ENCODE measurements at regions of chr1 and their contacts with region 1.

Region 1: GRCh38 chr1:25895365-25895993 is 10.7 kb downstream of the STMN1 start:
- DNase-seq: no peak
- ATAC-seq: peak; percentile 97
- H3K4me3 ChIP-seq: no peak overlapping the region
- H3K27ac ChIP-seq: no peak overlapping the region
- H3K4me1 ChIP-seq: peaks cover 6% of the 10 kb centered on the region; the same call in 1 of the 2 replicates
- H3K27me3 ChIP-seq: no peaks in the 10 kb centered on the region
- CTCF ChIP-seq: peak; percentile 98 to 100 (median 99); a peak in 5 of 6 replicates
- EP300 ChIP-seq: no peak
- POLR2A ChIP-seq: peak; percentile 44
- RAD21 ChIP-seq: peak; percentile 89

Region 2: DNA sequence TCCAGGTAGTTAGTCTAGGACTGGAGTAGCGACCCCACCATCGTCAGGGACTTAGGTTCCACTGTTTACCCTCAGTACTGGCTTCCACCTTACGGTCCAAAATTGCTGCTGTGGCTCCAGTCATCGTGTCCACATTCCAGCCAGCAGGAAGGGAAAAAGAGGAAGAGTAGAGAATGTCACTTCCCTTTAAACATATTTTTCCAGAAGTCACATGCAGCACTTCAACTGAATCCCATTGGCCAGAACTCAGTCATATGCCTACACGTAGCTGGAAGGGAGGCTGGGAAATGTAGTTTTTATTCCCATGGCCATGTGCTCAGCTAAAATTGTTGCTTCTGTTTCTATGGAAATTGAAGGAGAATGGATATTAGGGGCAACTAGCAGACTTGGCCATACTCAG is 179.6 kb before region 1 on chr1:
- CTCF ChIA-PET with region 1: no interaction called
- POLR2A ChIA-PET with region 1: no interaction called
- RAD21 ChIA-PET with region 1: no interaction called
- SMC1A ChIA-PET with region 1: no interaction called
- in situ Hi-C with region 1: no loop called
- intact Hi-C with region 1: no loop called
- DNase-seq: no peak
- ATAC-seq: no peak
- H3K4me3 ChIP-seq: no peak overlapping the region
- H3K27ac ChIP-seq: no peak overlapping the region
- H3K4me1 ChIP-seq: no peaks in the 10 kb centered on the region
- H3K27me3 ChIP-seq: 0 out of 4 replicates have a peak, but pooled peaks cover 0 to 2% of the 10 kb centered on the region in 2 experiments
- CTCF ChIP-seq: no peak
- EP300 ChIP-seq: no peak
- POLR2A ChIP-seq: no peak
- RAD21 ChIP-seq: no peak

Region 3: DNA sequence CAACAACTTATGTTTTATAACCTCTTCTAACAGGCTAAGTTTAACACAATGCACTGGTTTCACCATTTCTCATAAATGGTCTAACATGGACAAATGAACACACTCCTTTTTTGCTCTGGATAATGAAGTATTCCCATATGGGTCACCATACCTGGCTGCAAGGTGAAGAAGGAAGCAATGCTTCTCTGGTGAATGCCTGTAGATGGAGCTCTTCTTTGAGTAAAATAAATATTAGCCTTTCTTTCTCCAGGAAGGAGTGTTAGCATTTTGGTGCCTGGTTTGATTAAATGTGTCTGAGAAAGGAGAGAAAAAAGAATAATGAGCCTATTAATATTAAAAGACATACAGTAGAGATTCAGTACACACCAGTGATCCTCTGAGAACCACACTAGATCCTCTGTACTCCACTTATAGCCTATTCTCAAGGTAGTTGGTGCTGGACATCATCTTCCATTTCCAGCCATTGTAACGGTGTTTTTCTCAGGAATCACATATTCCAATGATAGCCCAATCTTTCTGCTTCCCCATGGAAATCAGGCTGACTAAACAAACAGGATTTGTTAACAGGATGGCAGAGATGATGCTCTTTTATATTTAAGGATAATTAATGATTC is 58.1 kb before region 1 on chr1:
- CTCF ChIA-PET with region 1: interaction called, 15 read pairs
- POLR2A ChIA-PET with region 1: no interaction called
- RAD21 ChIA-PET with region 1: interaction called, 3 read pairs
- SMC1A ChIA-PET with region 1: no interaction called
- in situ Hi-C with region 1: no loop called
- intact Hi-C with region 1: no loop called
- DNase-seq: no peak
- ATAC-seq: peak; percentile 49; the same call in 2 of the 3 replicates
- H3K4me3 ChIP-seq: no peak overlapping the region
- H3K27ac ChIP-seq: no peak overlapping the region
- H3K4me1 ChIP-seq: no peaks in the 10 kb centered on the region
- H3K27me3 ChIP-seq: no peaks in the 10 kb centered on the region
- CTCF ChIP-seq: peak; percentile 40 to 54 (median 50); a peak in 5 of 6 replicates
- EP300 ChIP-seq: no peak
- POLR2A ChIP-seq: no peak
- RAD21 ChIP-seq: peak; percentile 49

Region 4: GRCh38 chr1:25874934-25875855 is 20.3 kb before region 1 on chr1 and contains the start of gene PAQR7:
- CTCF ChIA-PET with region 1: interaction called, 25 read pairs
- POLR2A ChIA-PET with region 1: interaction called, 4 read pairs
- RAD21 ChIA-PET with region 1: interaction called, 13 read pairs
- SMC1A ChIA-PET with region 1: interaction called, 7 read pairs
- in situ Hi-C with region 1: no loop called
- intact Hi-C with region 1: no loop called
- DNase-seq: no peak
- ATAC-seq: peak; percentile 86
- H3K4me3 ChIP-seq: peak within 1 kb of the TSS; percentile 76
- H3K27ac ChIP-seq: peak within 1 kb of the TSS; percentile 27
- H3K4me1 ChIP-seq: peaks cover 34% of the 10 kb centered on the region
- H3K27me3 ChIP-seq: no peaks in the 10 kb centered on the region; a peak in 1 of 4 replicates
- CTCF ChIP-seq: no peak
- EP300 ChIP-seq: no peak
- POLR2A ChIP-seq: peak; percentile 51; the same call in 1 of the 2 replicates
- RAD21 ChIP-seq: no peak
- polyA plus RNA-seq, gene PAQR7: 1.1 to 2.5 TPM

Region 5: GRCh38 chr1:25971066-25971810 is 75.8 kb after region 1 on chr1:
- CTCF ChIA-PET with region 1: interaction called, 5 read pairs
- POLR2A ChIA-PET with region 1: interaction called, 10 read pairs
- RAD21 ChIA-PET with region 1: interaction called, 3 read pairs
- SMC1A ChIA-PET with region 1: interaction called, 6 read pairs
- in situ Hi-C with region 1: no loop called
- intact Hi-C with region 1: no loop called
- DNase-seq: no peak
- ATAC-seq: no peak; the same call in 1 of the 3 replicates
- H3K4me3 ChIP-seq: no peak overlapping the region
- H3K27ac ChIP-seq: peak overlapping the region; percentile 46; the same call in 1 of the 2 replicates
- H3K4me1 ChIP-seq: peaks cover 10% of the 10 kb centered on the region
- H3K27me3 ChIP-seq: no peaks in the 10 kb centered on the region
- CTCF ChIP-seq: no peak
- EP300 ChIP-seq: no peak
- POLR2A ChIP-seq: no peak
- RAD21 ChIP-seq: no peak

Region 6: GRCh38 chr1:26009796-26010460 is 114.4 kb after region 1 on chr1:
- CTCF ChIA-PET with region 1: interaction called, 16 read pairs
- POLR2A ChIA-PET with region 1: no interaction called
- RAD21 ChIA-PET with region 1: interaction called, 5 read pairs
- SMC1A ChIA-PET with region 1: interaction called, 3 read pairs
- in situ Hi-C with region 1: no loop called
- intact Hi-C with region 1: no loop called
- DNase-seq: no peak
- ATAC-seq: peak; percentile 64
- H3K4me3 ChIP-seq: no peak overlapping the region
- H3K27ac ChIP-seq: no peak overlapping the region
- H3K4me1 ChIP-seq: no peaks in the 10 kb centered on the region
- H3K27me3 ChIP-seq: no peaks in the 10 kb centered on the region; a peak in 1 of 4 replicates
- CTCF ChIP-seq: peak in 1 of 3 experiments; percentile 7; a peak in 1 of 6 replicates
- EP300 ChIP-seq: no peak
- POLR2A ChIP-seq: no peak
- RAD21 ChIP-seq: peak; percentile 10; the same call in 1 of the 2 replicates

Region 7: DNA sequence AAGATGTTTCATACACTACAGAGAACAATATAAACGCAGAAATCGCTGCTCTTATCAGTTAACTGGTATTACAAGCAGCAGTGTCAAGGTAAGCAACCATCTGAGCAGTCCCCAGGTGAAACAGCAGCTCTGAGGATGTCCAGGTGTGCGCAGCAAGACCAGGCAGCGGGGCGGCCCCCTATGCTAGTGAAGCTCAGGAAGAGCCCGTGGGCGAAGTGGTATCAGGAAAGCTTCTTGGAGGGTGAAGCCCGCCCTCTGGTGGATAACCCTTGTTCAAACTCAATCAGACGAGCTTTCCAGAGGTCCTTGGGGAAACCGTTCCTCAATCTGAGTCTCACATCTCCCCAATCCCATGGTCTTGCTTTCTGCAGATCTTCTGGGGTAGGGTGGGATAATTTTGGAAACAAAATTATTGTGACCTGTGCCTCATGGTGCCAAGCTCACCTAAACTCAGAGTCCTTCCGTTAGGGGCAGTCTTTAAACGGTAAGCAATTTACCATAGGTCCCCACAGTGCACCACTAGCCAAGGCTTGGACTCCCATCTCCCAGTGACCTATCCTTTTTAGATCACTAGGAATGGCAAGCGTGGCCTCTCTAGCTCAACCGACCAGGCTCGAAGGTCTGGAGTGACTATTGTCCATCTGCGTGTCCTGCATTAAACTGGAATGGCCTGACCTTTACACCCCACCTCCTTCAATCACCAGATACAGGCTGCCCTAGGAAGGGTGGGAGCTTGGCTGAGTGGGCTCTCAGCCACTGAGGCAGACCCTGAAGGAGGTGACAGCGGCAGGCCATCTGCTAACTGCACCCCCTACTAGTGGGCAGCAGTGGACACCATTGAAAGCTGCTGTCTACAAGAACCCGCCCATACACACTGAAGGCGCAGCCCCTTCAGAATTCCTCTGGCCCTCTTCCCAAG is 249.8 kb after region 1 on chr1:
- CTCF ChIA-PET with region 1: interaction called, 29 read pairs
- POLR2A ChIA-PET with region 1: no interaction called
- RAD21 ChIA-PET with region 1: interaction called, 8 read pairs
- SMC1A ChIA-PET with region 1: interaction called, 4 read pairs
- in situ Hi-C with region 1: no loop called
- intact Hi-C with region 1: no loop called
- DNase-seq: no peak
- ATAC-seq: peak; percentile 95
- H3K4me3 ChIP-seq: no peak overlapping the region
- H3K27ac ChIP-seq: no peak overlapping the region
- H3K4me1 ChIP-seq: no peaks in the 10 kb centered on the region
- H3K27me3 ChIP-seq: no peaks in the 10 kb centered on the region; a peak in 2 of 4 replicates
- CTCF ChIP-seq: peak; percentile 74 to 82 (median 76)
- EP300 ChIP-seq: no peak
- POLR2A ChIP-seq: no peak
- RAD21 ChIP-seq: peak; percentile 86